ENCODE measurements at regions of chr5 and their contacts with region 1.

Region 1: DNA sequence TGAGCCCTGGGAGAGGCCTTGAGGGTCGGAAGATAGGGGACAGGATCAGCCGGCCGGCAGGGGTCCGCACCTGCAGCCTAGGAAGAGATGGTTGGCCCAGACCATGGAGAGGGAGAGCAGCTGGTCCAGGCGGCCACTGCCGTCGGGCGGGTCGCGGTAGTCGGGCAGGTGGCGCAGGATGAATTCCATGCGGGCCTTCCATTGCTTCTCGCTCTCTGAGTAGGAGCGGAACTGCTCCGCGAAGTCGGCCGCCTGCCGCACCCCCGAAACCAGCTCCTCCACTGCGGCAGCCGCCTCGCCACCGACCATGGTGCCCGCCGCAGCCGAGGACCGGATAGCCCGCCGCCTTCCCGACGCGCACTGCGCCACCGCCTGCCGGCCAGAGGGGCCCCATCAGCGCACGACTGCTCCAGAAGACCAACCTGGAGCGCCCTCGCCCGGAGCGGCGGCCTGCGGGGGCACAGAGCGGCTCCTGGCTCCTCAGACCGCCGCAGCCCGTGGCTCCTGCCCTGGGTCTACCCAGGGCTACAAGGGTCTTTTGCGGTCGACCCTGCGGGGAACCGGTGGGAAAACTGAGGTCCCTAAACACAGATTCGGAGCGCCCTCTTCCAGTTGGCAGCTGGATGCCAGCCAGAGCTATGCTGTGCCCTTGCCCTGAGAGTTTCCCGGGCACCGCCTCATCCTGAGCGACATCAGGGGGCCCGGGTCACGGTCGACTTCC is at the start of gene CDKN2AIPNL:
- DNase-seq: peak; percentile 97
- H3K4me3 Mint-ChIP-seq: peak within 1 kb of the TSS; percentile 98
- H3K27ac Mint-ChIP-seq: peak within 1 kb of the TSS; percentile 92
- H3K4me1 Mint-ChIP-seq: peaks cover 24% of the 10 kb centered on the region
- H3K27me3 Mint-ChIP-seq: no peaks in the 10 kb centered on the region
- total RNA-seq, gene CDKN2AIPNL: 32.0 and 34.3 TPM in 2 replicates

Region 2: DNA sequence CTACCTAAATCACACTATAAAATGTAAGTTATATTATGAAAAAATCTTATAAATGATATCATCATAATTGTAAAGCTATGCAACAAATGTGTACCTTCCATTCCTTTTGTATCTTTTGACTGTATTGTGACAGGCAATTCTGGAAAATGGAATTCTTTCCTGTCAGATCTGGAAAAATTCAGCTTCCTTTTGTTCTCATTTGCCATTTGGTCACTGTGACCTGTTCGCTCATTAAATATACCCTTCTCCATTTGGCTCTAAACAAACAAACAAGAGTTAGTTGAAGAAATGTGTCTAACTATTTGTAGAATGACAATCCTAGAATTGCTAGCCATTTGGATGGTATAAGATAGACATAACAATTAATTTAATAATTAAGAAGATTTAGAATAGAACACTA is 107.4 kb before region 1 on chr5:
- intact Hi-C with region 1: loop called (anchors 10 kb)
- DNase-seq: no peak
- H3K4me3 Mint-ChIP-seq: no peak overlapping the region
- H3K27ac Mint-ChIP-seq: no peak overlapping the region
- H3K4me1 Mint-ChIP-seq: no peaks in the 10 kb centered on the region
- H3K27me3 Mint-ChIP-seq: peaks cover 6% of the 10 kb centered on the region

Region 3: DNA sequence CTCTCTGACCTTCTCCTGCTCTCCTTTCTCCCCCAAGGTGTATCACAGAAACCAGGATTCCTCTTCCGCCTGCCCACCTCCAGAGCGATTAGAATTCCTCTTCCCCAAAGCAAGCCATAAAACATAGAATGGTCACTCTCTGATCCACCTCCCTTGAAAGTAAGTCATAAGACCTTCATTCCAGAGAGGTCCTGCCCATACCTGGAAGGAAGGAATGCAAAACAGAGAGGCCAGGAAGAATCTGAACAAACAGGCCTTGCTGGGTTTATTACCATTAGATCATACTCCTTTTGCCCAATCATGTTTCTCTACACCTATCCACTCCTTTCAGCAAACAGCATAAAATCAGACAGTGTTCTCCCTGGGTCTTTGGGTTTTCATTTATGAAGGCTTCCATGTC is 65.7 kb before region 1 on chr5:
- intact Hi-C with region 1: no loop called
- DNase-seq: no peak
- H3K4me3 Mint-ChIP-seq: no peak overlapping the region
- H3K27ac Mint-ChIP-seq: no peak overlapping the region
- H3K4me1 Mint-ChIP-seq: no peaks in the 10 kb centered on the region
- H3K27me3 Mint-ChIP-seq: peaks cover 2% of the 10 kb centered on the region

Region 4: DNA sequence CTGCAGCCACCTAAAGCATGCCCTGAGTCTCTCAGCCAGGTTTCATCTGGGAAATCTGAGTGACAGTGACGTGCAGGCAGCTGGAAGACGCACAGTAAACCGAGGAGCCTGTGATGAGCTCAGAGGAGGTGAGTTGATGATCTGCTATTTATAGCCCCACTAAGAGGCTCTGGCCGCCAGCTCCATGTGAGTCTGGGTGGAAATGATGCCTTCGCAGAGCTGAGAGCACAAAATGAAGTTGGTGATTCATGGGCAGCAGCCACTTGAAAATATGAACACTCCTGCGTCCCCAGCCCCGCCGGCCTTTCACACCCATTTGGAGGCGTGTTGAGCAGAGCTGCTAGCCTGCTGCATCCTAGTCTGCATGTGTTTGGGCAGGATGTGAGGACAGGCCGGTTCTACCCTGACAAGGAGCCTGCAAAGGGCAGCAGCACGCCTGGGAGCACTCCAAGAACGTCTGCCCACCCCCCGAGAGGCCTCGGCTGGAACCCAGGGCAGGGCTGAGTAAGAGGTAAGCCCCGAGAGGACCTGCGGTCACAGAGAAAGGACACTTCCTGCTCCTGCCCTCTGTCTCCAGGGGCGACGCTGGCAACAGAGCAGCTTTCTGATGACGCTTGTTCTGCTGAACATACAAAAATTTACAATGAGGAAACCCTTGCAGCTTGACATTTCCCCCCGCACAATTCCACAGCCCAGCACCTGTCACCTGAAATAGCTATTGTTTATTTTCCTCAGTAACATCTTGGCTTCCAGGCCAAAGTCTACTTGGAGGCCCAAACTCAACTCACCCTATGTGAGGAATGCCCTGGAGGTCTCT is 25.0 kb after region 1 on chr5:
- intact Hi-C with region 1: loop called (anchors 2 kb)
- DNase-seq: peak; percentile 88
- H3K4me3 Mint-ChIP-seq: peak overlapping the region; percentile 39
- H3K27ac Mint-ChIP-seq: peak overlapping the region; percentile 85
- H3K4me1 Mint-ChIP-seq: peaks cover 23% of the 10 kb centered on the region
- H3K27me3 Mint-ChIP-seq: no peaks in the 10 kb centered on the region

Region 5: DNA sequence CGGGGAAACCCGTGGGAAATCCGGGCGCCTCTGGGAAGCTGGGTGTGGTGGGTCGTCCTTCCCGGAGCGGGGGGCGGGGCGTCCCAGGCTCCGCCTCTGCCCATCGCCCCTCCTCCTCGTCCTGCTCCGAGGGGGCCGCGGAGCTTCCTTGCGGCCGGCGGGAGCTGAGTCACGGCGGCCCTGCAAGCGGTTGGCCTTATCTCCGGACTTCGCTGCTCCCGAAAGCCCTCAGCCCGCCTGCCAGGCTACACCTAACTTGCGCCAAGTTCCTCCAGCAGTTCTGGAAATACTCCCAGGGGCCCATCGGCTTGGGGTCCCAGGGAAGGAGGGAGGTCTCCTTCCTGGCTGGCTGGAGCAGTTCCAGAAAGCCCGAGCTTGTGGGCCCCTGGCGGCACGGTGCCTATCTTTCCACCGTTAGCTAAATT is 54.1 kb after region 1 on chr5:
- intact Hi-C with region 1: loop called (anchors 5 kb)
- DNase-seq: peak; percentile 87
- H3K4me3 Mint-ChIP-seq: peak overlapping the region; percentile 66
- H3K27ac Mint-ChIP-seq: peak overlapping the region; percentile 57
- H3K4me1 Mint-ChIP-seq: peaks cover 15% of the 10 kb centered on the region
- H3K27me3 Mint-ChIP-seq: no peaks in the 10 kb centered on the region

Region 6: GRCh38 chr5:134533115-134533815 is 121.6 kb after region 1 on chr5:
- intact Hi-C with region 1: no loop called
- DNase-seq: no peak
- H3K4me3 Mint-ChIP-seq: no peak overlapping the region
- H3K27ac Mint-ChIP-seq: no peak overlapping the region
- H3K4me1 Mint-ChIP-seq: peaks cover 56% of the 10 kb centered on the region
- H3K27me3 Mint-ChIP-seq: no peaks in the 10 kb centered on the region

Region 7: GRCh38 chr5:134586866-134587524 is 175.3 kb after region 1 on chr5:
- intact Hi-C with region 1: loop called (anchors 2 kb)
- DNase-seq: peak; percentile 95
- H3K4me3 Mint-ChIP-seq: peak overlapping the region; percentile 51
- H3K27ac Mint-ChIP-seq: peak overlapping the region; percentile 84
- H3K4me1 Mint-ChIP-seq: peaks cover 16% of the 10 kb centered on the region
- H3K27me3 Mint-ChIP-seq: no peaks in the 10 kb centered on the region

Measured in activated CD4-positive, alpha-beta T cell treated with anti-CD3 and anti-CD28 coated beads, Interleukin-2, amount 10 ng/mL, durations not matched to agents 24 days and 14 days (primary cell).